ENCODE measurements at regions of chr10 and their contacts with region 1.

Region 1: DNA sequence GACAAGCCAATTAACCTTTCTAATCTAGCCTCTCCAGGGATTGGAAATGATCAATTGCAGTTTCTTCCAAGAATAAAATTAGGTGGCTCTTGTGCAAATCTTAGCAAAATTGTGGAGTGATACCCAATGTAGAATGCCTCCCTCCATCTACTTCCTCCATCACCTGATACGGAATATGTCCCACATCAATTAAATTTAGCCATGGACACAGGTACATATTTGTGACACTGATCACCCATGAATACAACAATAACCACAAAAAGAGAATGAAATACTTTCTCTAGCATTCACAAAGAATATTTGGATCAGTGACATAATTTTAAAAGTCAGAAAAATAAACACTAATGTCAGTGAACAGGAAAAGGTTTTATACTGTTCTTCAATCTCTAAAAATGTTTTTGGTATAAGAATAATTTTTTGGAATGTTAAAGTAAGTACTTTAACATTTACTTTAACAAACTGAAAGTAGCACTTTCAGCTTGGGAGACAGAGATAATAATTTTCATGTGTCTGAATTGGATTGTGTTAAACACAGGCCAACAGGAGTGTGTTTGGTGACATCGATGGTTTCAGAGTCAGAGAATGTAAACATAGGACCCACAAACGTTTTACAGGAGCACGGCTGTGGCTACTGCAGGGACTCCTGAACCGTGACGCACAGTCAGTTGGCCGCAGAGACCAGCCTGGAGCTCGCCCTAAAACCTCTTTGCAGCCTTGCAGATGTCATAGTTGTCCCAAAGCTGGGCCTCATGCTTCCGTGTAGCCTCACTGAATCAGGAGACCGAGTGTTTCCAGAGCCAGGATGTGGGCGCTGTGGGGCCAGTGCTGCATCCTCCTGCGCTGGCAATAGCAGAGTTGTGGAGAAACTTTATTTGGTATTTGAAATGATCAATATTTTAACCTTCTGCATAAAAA is 7.2 kb downstream of the RBM20 start:
- DNase-seq: no peak
- H3K4me3 Mint-ChIP-seq: no peak overlapping the region
- H3K27ac Mint-ChIP-seq: peak overlapping the region; percentile 27
- H3K4me1 Mint-ChIP-seq: peaks cover 24% of the 10 kb centered on the region
- H3K27me3 Mint-ChIP-seq: peaks cover 40% of the 10 kb centered on the region

Region 2: GRCh38 chr10:110617425-110618229 is 33.7 kb before region 1 on chr10:
- intact Hi-C with region 1: loop called (anchors 2 kb)
- DNase-seq: no peak
- H3K4me3 Mint-ChIP-seq: peak overlapping the region; percentile 47
- H3K27ac Mint-ChIP-seq: peak overlapping the region; percentile 93
- H3K4me1 Mint-ChIP-seq: peaks cover 60% of the 10 kb centered on the region
- H3K27me3 Mint-ChIP-seq: peaks cover 7% of the 10 kb centered on the region